HCT116 (cell line): ENCODE measurements at regions of chr6 and their contacts with region 1.

Region 1: DNA sequence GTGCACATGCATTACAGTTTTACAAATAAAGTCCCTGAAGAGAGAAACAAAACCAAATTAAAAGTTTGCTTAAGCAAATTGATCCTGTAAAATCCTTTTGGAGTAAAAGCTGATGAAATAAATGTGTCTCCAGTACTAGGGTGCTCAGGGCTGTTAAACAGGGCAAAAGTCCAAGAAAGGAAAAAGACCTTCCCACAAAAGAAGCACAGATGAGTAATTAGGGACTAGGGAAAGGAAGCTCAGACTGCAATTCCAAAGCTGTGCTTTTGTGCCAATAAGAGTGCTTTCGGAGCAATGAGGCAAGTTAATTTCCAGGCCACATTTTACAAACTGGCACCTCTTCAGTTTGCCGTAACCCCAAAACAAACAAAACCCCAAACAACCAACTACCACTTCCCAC is 10.4 kb upstream of the RNF182 start:
- DNase-seq: no peak
- ATAC-seq: no peak
- H3K4me3 ChIP-seq: no peak overlapping the region
- H3K27ac ChIP-seq: no peak overlapping the region
- H3K4me1 ChIP-seq: peaks cover 5 to 23% of the 10 kb centered on the region in 2 experiments; a peak in 3 of 4 replicates
- H3K27me3 ChIP-seq: no peaks in the 10 kb centered on the region
- CTCF ChIP-seq: no peak
- POLR2A ChIP-seq: no peak
- RAD21 ChIP-seq: no peak

Region 2: DNA sequence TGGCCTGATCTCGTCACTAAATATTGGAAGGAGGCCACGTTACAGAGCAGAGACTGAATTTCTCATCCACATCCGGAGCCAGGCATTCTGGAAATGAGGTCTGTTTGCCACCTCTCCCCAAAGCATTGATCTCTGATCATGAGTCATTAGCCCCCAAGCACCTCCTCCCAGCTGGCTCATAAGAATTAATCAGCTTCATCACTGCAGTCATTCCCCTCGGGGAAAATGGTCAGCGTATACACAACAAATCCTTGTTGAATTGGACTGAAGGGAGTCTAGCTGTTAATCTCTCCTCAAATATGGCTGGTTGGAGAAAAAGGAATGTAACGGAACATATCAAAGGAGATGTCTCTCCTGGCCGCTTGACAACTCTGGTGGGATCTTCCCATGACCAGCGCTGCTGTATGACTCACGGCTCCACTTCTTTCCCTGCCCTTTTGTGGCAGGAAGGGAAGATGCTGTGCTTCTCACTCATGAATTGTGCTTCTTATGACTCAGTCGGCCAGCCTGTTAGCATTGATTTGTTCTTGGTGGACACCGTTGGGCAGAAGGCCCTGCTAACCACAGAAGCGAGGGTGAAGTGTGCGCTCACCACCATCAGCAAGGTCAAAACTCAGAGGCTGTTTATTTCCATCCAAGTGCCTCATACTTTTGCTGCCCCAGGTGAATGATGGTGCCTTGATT is 87.1 kb after region 1 on chr6:
- CTCF ChIA-PET with region 1: interaction called, 14 read pairs
- POLR2A ChIA-PET with region 1: no interaction called
- RAD21 ChIA-PET with region 1: interaction called, 6 to 8 read pairs
- intact Hi-C with region 1: no loop called
- DNase-seq: peak; percentile 95
- ATAC-seq: peak; percentile 86
- H3K4me3 ChIP-seq: peak overlapping the region; percentile 8 to 28; a peak in 3 of 4 replicates
- H3K27ac ChIP-seq: peak overlapping the region; percentile 4; the same call in 1 of the 2 replicates
- H3K4me1 ChIP-seq: peaks cover 16 to 33% of the 10 kb centered on the region in 2 experiments
- H3K27me3 ChIP-seq: no peaks in the 10 kb centered on the region
- CTCF ChIP-seq: no peak
- POLR2A ChIP-seq: no peak
- RAD21 ChIP-seq: peak; percentile 29

Region 3: DNA sequence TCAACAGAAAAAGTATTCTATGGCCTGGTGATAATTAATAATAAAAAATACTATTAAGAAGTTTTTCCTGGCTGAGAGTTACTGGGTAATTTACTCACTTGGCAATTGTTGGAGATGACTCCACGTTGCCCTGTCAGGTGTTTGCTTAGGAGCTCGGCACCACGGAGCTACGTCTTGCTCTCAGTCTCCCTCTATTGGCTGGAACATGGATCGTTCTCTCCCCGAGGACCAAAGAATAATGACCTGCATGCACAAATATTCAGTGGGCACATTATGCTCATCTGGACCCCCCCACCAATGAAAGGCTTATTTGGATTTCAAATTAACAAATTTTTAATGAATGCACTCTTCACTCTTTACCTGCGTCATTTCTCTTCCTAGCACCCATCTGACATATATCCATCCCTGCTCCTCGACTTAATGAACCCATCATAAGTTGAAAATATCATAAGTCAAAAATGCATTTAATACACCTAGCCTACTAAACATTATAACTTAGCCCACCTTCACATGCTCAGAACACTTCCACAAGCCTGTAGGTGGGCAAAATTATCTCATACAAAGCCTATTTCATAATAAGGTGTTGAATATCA is 132.2 kb after region 1 on chr6:
- CTCF ChIA-PET with region 1: interaction called, 52 read pairs
- POLR2A ChIA-PET with region 1: interaction called, 3 read pairs
- RAD21 ChIA-PET with region 1: interaction called, 6 to 7 read pairs
- intact Hi-C with region 1: loop called (anchors 1 kb)
- DNase-seq: peak; percentile 51
- ATAC-seq: peak; percentile 96
- H3K4me3 ChIP-seq: no peak overlapping the region
- H3K27ac ChIP-seq: no peak overlapping the region
- H3K4me1 ChIP-seq: peaks cover 0 to 6% of the 10 kb centered on the region in 2 experiments; a peak in 2 of 4 replicates
- H3K27me3 ChIP-seq: no peaks in the 10 kb centered on the region
- CTCF ChIP-seq: peak; percentile 64 to 76 (median 68); a peak in 5 of 6 replicates
- POLR2A ChIP-seq: no peak
- RAD21 ChIP-seq: peak; percentile 78

Region 4: DNA sequence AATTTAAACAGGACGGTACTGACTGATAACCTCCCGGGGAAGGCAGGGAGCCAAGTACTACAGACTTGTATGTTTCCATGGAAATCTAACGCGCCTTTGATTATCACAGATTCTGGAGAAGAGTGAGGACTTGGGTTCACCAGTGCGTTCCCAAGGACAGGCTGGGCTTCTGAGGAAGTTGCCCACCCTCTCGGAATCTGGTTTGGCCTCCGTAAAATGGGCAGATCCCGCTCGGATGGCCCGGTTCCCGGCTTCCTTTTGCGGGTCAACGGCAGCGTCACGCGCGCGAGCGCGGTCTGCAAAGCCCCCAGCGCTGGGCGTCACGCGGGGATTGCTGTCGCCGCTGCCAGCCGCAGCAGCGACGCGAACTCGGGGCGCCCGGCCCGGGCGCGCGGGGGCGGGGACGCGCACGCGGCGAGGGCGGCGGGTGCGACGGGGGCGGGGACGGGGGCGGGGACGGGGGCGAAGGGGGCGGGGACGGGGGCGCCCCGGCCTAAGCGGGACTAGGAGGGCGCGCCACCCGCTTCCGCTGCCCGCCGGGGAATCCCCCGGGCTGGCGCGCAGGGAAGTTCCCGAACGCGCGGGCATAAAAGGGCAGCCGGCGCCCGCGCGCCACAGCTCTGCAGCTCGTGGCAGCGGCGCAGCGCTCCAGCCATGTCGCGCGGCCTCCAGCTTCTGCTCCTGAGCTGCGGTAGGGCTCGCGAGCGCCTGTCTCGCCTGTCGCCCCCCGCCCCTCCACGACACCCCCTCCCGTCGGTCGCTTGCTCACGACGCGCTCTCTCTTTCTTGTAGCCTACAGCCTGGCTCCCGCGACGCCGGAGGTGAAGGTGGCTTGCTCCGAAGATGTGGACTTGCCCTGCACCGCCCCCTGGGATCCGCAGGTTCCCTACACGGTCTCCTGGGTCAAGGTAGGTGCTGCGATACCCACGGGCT is 203.1 kb after region 1 on chr6 and contains the start of gene CD83:
- CTCF ChIA-PET with region 1: no interaction called
- POLR2A ChIA-PET with region 1: no interaction called
- RAD21 ChIA-PET with region 1: no interaction called
- intact Hi-C with region 1: no loop called
- DNase-seq: peak; percentile 6
- ATAC-seq: peak; percentile 86
- H3K4me3 ChIP-seq: peak within 1 kb of the TSS; percentile 62 to 68
- H3K27ac ChIP-seq: peak within 1 kb of the TSS; percentile 24; the same call in 1 of the 2 replicates
- H3K4me1 ChIP-seq: peaks cover 5 to 19% of the 10 kb centered on the region in 2 experiments; a peak in 3 of 4 replicates
- H3K27me3 ChIP-seq: no peaks in the 10 kb centered on the region
- CTCF ChIP-seq: peak in 2 of 3 experiments; percentile 27 to 47; a peak in 3 of 6 replicates
- POLR2A ChIP-seq: peak; percentile 61
- RAD21 ChIP-seq: peak; percentile 25; the same call in 1 of the 2 replicates
- total RNA-seq, gene CD83: 6.0 TPM

Region 5: DNA sequence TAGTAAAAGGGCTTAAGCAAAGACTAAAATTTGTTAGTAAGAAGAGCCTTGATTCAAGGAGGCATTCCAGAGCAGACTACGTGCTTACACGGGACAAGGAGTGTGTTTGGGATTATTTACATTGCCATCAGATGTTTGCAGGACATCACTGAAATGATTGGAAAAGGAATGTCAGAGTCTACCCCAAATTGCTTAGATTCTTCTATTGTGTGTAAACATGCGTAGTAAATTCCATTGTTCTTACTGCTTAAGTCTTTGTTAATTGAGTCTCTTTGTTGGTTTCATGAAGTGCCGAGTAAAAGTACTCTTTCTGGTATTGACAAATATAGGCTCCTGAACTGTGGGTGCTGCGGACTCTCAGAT is 263.7 kb after region 1 on chr6:
- CTCF ChIA-PET with region 1: no interaction called
- POLR2A ChIA-PET with region 1: no interaction called
- RAD21 ChIA-PET with region 1: no interaction called
- intact Hi-C with region 1: no loop called
- DNase-seq: no peak
- ATAC-seq: no peak
- H3K4me3 ChIP-seq: no peak overlapping the region
- H3K27ac ChIP-seq: no peak overlapping the region
- H3K4me1 ChIP-seq: no peaks in the 10 kb centered on the region
- H3K27me3 ChIP-seq: no peaks in the 10 kb centered on the region
- CTCF ChIP-seq: no peak
- POLR2A ChIP-seq: no peak
- RAD21 ChIP-seq: no peak

Region 6: GRCh38 chr6:14210663-14211561 is 296.6 kb after region 1 on chr6:
- CTCF ChIA-PET with region 1: no interaction called
- POLR2A ChIA-PET with region 1: no interaction called
- RAD21 ChIA-PET with region 1: no interaction called
- intact Hi-C with region 1: no loop called
- DNase-seq: peak; percentile 72
- ATAC-seq: peak; percentile 90
- H3K4me3 ChIP-seq: peak overlapping the region; percentile 63 to 76
- H3K27ac ChIP-seq: peak overlapping the region; percentile 65; the same call in 1 of the 2 replicates
- H3K4me1 ChIP-seq: peaks cover 6 to 25% of the 10 kb centered on the region in 2 experiments
- H3K27me3 ChIP-seq: no peaks in the 10 kb centered on the region
- CTCF ChIP-seq: peak; percentile 22 to 49 (median 41); a peak in 3 of 6 replicates
- POLR2A ChIP-seq: no peak
- RAD21 ChIP-seq: peak; percentile 81